Esophagus muscularis mucosa (tissue), 4 donors: ENCODE measurements at regions of chr3 and their contacts with region 1.

Region 1: GRCh38 chr3:33717866-33718594 is at the start of gene CLASP2:
- DNase-seq: peak; percentile 96
- H3K4me3 ChIP-seq: peak within 1 kb of the TSS; percentile 79 to 99 (median 92)
- H3K27ac ChIP-seq: peak within 1 kb of the TSS; percentile 97 to 100 (median 98)
- H3K4me1 ChIP-seq: peaks cover 7 to 22% (median 19%) of the 10 kb centered on the region in 4 donors
- H3K27me3 ChIP-seq: no peaks in the 10 kb centered on the region
- CTCF ChIP-seq: no peak
- EP300 ChIP-seq: no peak
- POLR2A ChIP-seq: no peak
- total RNA-seq, gene CLASP2: 38.4 to 53.2 (median 43.1) TPM

Region 2: DNA sequence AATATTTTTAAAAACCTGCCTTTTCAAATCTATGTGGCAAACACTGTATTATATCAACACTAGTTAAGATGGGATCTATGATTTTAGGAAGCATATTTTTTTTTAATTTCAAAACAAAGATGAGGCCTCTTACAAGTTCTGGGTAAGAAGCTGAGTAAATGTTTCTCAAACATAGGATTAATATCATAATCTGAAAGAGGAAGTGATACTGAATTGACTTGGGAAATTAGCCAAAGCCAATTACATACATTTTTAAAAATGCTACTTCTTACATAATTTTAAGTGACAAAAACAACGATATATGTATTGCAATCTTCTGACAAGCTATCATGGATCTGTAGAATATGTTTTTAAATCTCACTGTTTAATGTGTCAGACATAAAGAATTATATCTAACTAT is 142.7 kb before region 1 on chr3:
- intact Hi-C with region 1: no loop called
- DNase-seq: no peak
- H3K4me3 ChIP-seq: no peak overlapping the region
- H3K27ac ChIP-seq: no peak overlapping the region
- H3K4me1 ChIP-seq: no peaks in the 10 kb centered on the region
- H3K27me3 ChIP-seq: no peaks in the 10 kb centered on the region
- CTCF ChIP-seq: no peak
- EP300 ChIP-seq: no peak
- POLR2A ChIP-seq: no peak

Region 3: GRCh38 chr3:33787328-33788009 is 69.4 kb after region 1 on chr3:
- intact Hi-C with region 1: loop called (anchors 5 kb)
- DNase-seq: no peak
- H3K4me3 ChIP-seq: peak overlapping the region; percentile 29 to 46 (median 34)
- H3K27ac ChIP-seq: no peak overlapping the region
- H3K4me1 ChIP-seq: peaks cover 0 to 6% (median 4%) of the 10 kb centered on the region in 4 donors
- H3K27me3 ChIP-seq: no peaks in the 10 kb centered on the region
- CTCF ChIP-seq: peak; percentile 66 to 83 (median 74)
- EP300 ChIP-seq: no peak
- POLR2A ChIP-seq: no peak